Dendritic cell treated with granulocyte-macrophage colony-stimulating factor and Interleukin-4, amounts not matched to agents 40 ng/mL and 50 ng/mL, for 4 days (primary cell): ENCODE measurements at regions of chr12 and their contacts with region 1.

Region 1: DNA sequence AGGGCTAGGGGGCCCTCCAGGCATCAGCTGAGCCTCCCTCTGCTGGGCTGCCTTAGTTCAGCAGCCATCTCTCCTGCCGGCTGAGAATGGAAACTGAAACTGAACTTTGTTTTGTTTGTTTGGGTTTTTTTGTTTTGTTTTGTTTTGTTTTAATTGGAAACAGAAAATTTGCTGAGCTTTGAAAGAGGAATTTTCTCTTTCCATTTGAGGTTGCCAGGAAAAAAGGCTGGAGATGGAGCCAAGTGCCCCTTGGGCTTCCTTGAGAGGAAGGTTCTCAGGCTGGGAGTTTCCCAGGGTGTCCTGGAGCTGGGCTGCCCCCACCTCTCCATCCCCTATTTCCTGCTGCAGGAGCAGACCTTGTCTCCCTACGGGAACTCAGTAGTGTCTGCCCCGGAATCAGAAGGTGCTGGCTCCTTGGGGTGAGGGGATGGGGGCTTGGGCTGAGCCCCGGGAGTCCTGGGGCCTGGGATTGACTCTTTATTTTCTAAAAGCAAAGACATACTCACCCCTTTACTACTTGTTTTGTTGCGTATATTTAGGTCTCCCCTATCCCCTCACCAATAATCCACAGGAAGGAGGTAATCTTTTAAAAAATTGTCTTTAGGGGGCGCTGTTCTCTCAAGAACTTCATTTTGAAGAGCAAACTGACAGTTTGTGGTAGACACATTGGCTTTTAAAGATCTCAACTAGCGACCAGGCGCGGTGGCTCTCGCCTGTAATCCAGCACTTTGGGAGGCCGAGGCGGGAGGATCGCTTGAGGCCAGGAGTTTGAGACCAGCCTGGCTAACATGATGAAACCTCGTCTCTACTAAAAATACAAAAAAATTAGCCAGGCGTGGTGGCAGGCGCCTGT is 21.3 kb upstream of the OASL start:
- H3K4me3 Mint-ChIP-seq: peak overlapping the region; percentile 68
- H3K27ac Mint-ChIP-seq: peak overlapping the region; percentile 83
- H3K4me1 Mint-ChIP-seq: peaks cover 8% of the 10 kb centered on the region
- H3K27me3 Mint-ChIP-seq: peaks cover 1% of the 10 kb centered on the region

Region 2: GRCh38 chr12:120914794-120915193 is 145.6 kb before region 1 on chr12:
- intact Hi-C with region 1: no loop called
- H3K4me3 Mint-ChIP-seq: no peak overlapping the region
- H3K27ac Mint-ChIP-seq: no peak overlapping the region
- H3K4me1 Mint-ChIP-seq: no peaks in the 10 kb centered on the region
- H3K27me3 Mint-ChIP-seq: no peaks in the 10 kb centered on the region

Region 3: GRCh38 chr12:121095544-121096198 is 35.3 kb after region 1 on chr12:
- intact Hi-C with region 1: loop called (anchors 5 kb)
- H3K4me3 Mint-ChIP-seq: peak overlapping the region; percentile 66
- H3K27ac Mint-ChIP-seq: peak overlapping the region; percentile 3
- H3K4me1 Mint-ChIP-seq: peaks cover 11% of the 10 kb centered on the region
- H3K27me3 Mint-ChIP-seq: peaks cover 10% of the 10 kb centered on the region

Region 4: GRCh38 chr12:121110211-121110940 is 50.0 kb after region 1 on chr12:
- intact Hi-C with region 1: loop called (anchors 1 kb)
- H3K4me3 Mint-ChIP-seq: no peak overlapping the region
- H3K27ac Mint-ChIP-seq: no peak overlapping the region
- H3K4me1 Mint-ChIP-seq: peaks cover 5% of the 10 kb centered on the region
- H3K27me3 Mint-ChIP-seq: no peaks in the 10 kb centered on the region

Region 5: GRCh38 chr12:121223292-121224285 is 163.2 kb after region 1 on chr12:
- intact Hi-C with region 1: loop called (anchors 5 kb)
- H3K4me3 Mint-ChIP-seq: no peak overlapping the region
- H3K27ac Mint-ChIP-seq: no peak overlapping the region
- H3K4me1 Mint-ChIP-seq: peaks cover 31% of the 10 kb centered on the region
- H3K27me3 Mint-ChIP-seq: no peaks in the 10 kb centered on the region

Region 6: DNA sequence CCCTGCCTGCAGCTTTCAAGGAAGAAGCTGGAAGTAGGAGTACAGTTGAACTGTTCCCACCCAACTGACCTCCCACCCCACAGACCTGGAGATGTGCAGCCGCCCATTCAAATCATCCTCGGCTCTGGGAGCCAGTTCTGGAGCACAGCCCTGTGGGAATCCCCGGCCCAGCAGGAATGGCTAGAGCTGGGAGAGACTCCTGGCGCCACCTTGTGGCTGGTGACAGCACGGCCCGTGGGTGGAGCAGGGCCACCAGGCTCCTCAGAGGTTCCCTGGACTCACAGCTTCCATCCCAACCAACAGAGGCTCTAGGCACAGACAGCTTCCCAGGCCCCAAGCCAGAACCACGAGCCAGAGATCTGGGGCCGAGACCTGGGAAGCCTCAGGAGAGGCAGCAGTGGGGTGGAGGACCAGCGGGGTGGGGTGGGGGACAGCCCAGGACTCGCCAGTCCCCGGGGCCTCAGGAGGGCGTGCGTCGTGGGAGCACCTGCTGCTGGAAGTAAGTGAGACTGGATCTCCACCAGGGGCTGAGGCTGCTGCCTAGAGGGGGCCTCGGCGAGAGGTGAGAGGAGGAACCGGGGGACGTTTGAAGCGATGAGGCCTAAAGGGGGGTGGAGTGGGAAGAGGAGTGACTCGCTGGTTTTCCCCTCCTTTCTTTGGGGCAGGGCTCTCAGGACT is 383.0 kb after region 1 on chr12:
- intact Hi-C with region 1: loop called (anchors 5 kb)
- H3K4me3 Mint-ChIP-seq: no peak overlapping the region
- H3K27ac Mint-ChIP-seq: peak overlapping the region; percentile 20
- H3K4me1 Mint-ChIP-seq: peaks cover 16% of the 10 kb centered on the region
- H3K27me3 Mint-ChIP-seq: no peaks in the 10 kb centered on the region